OCI-LY7 (cell line): ENCODE measurements at regions of chr1 and their contacts with region 1.

Region 1: GRCh38 chr1:109483672-109484518 is at the start of gene ATXN7L2:
- DNase-seq: peak; percentile 95
- H3K4me3 ChIP-seq: peak within 1 kb of the TSS; percentile 74
- H3K27ac ChIP-seq: peak within 1 kb of the TSS; percentile 62
- H3K4me1 ChIP-seq: peaks cover 18% of the 10 kb centered on the region
- CTCF ChIP-seq: 0 out of 2 replicates have a peak, but pooled peaks have one; percentile 8
- total RNA-seq, gene ATXN7L2: 6.5 and 13.1 TPM in 2 replicates

Region 2: DNA sequence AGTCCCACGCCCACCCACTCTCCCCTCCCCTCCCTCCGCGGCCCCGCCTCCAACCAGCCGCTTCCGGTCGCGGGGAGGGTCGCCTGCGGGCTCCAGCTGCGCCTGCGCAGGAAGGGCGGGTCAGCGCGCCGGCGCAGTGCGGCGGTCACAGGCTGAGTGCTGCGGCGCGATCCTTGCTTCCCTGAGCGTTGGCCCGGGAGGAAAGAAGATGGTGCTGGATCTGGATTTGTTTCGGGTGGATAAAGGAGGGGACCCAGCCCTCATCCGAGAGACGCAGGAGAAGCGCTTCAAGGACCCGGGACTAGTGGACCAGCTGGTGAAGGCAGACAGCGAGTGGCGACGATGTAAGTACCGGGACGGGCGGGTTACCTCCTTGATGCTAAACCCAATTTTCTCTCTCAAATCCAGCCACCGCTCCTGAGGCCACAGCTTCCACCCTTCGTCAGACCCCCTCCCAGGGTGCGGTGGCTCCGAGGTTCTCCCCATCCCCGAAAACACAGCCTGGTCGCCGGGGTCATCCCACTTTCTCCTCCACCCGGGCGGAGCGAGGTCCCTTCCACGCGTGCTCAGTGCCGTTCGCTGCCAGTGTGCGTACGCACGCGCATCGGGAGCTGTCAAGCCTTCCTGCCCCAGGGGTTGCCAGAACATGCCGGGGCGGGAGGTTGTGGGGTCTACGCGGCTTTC is 270.0 kb before region 1 on chr1 and contains the start of gene SARS1:
- CTCF ChIA-PET with region 1: interaction called, 12 read pairs
- POLR2A ChIA-PET with region 1: no interaction called
- intact Hi-C with region 1: no loop called
- DNase-seq: peak; percentile 93
- H3K4me3 ChIP-seq: peak within 1 kb of the TSS; percentile 82
- H3K27ac ChIP-seq: peak within 1 kb of the TSS; percentile 73
- H3K4me1 ChIP-seq: peaks cover 34% of the 10 kb centered on the region
- CTCF ChIP-seq: no peak
- total RNA-seq, gene SARS1: 277 and 295 TPM in 2 replicates

Region 3: DNA sequence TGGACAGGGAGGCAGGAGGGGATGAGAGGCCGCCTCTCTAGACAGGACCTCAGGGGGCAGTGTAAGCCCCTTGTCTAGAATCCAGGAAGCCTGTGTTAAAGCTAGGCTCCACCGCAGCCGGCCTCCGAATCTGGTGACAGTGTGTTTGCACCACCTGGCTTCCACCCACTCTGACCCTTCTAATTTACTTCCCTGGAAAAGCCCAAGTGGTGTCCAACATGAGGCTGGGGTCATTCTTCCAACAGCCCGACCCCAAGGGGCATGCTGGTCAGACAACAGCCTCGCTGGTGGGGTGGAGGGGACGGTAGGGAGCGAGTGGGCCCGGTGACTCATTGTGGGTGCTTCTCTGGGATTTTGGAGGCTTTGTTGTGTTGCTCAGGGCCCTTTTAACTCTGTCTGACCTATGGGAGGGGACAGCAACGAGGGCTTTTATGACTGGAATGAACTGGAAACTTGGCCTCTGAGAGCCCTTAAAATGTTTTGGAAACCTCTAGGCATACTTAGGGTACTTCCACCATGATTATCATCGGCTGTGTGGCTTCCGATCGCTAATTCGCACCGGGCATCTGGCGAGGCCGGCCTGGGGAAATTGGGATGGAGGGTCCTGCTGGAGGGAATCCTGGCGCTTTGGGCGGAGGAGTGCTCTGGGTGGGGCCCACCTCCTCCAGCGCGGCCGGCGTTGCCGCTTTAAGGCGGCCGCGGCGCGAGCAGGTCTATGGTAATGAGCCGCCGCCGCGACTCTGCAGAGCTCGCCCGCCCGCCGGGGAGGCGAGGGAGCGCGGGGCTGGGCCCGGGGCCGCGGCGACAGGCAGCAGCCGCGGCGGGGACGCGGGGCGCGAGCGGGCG is 234.9 kb before region 1 on chr1 and contains the start of gene CELSR2:
- CTCF ChIA-PET with region 1: interaction called, 6 read pairs
- POLR2A ChIA-PET with region 1: interaction called, 4 read pairs
- intact Hi-C with region 1: loop called (anchors 1 kb)
- DNase-seq: peak; percentile 88
- H3K4me3 ChIP-seq: peak within 1 kb of the TSS; percentile 72
- H3K27ac ChIP-seq: no peak within 1 kb of the TSS
- H3K4me1 ChIP-seq: peaks cover 21% of the 10 kb centered on the region
- CTCF ChIP-seq: no peak
- total RNA-seq, gene CELSR2: 5.0 and 6.9 TPM in 2 replicates

Region 4: GRCh38 chr1:109282952-109283747 is 200.7 kb before region 1 on chr1 and contains the start of gene PSRC1:
- CTCF ChIA-PET with region 1: no interaction called
- POLR2A ChIA-PET with region 1: interaction called, 3 read pairs
- intact Hi-C with region 1: loop called (anchors 5 kb)
- DNase-seq: peak; percentile 94
- H3K4me3 ChIP-seq: peak within 1 kb of the TSS; percentile 77
- H3K27ac ChIP-seq: peak within 1 kb of the TSS; percentile 60
- H3K4me1 ChIP-seq: peaks cover 17% of the 10 kb centered on the region
- CTCF ChIP-seq: peak; percentile 70
- total RNA-seq, gene PSRC1: 42.7 and 44.5 TPM in 2 replicates

Region 5: GRCh38 chr1:109361649-109362048 is 122.2 kb before region 1 on chr1:
- CTCF ChIA-PET with region 1: no interaction called
- POLR2A ChIA-PET with region 1: no interaction called
- intact Hi-C with region 1: no loop called
- DNase-seq: no peak
- H3K4me3 ChIP-seq: no peak overlapping the region
- H3K27ac ChIP-seq: no peak overlapping the region
- H3K4me1 ChIP-seq: peaks cover 37% of the 10 kb centered on the region
- CTCF ChIP-seq: no peak

Region 6: DNA sequence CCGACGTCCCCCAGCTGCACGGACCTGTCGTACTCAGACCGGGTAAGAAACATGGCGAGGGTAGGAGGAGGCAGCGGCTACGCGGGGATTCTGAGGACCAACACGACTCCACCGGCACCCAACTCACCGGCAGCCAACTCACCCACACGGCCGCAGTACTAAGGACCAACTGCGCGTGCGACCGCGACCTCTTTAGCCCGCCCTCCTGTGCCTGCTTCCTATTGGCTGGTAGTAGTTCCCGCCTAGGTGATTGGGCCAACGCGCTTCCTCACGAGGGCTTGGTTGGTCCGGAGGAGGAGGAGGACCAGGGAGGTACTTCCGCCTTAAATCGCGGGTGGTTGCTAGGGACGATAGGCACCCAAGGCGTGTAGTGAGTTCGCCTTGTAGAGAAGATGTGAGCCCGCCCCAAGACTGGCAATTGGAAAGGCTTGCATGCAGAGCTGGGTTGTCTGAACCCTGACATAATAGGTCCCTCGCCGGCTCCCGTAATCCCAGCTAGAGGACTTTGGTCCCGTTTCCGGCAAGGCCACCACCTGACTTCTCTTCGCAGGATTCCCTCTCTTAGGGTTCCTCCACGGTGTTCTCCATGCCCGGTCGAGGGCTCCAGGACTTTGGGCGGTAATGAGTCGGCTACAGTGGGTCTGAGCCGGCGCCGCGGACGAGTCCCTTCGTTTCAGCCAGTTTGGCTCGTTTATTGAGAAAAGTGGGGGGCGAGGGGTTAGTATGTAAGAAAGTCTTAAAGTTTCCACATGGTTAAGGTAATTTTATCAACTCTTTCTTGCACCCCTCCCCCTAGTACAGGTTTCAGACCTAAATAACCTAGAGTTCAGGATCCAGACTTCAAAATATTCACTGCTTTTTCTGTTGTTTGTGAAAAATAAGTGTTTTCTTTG is 57.4 kb before region 1 on chr1 and contains the start of gene PSMA5:
- CTCF ChIA-PET with region 1: interaction called, 3 read pairs
- POLR2A ChIA-PET with region 1: interaction called, 5 read pairs
- intact Hi-C with region 1: loop called (anchors 1 kb)
- DNase-seq: peak; percentile 99
- H3K4me3 ChIP-seq: peak within 1 kb of the TSS; percentile 97
- H3K27ac ChIP-seq: peak within 1 kb of the TSS; percentile 85
- H3K4me1 ChIP-seq: peaks cover 25% of the 10 kb centered on the region
- CTCF ChIP-seq: no peak
- total RNA-seq, gene PSMA5: 46.3 and 53.3 TPM in 2 replicates

Region 7: GRCh38 chr1:109548321-109549267 is 64.7 kb after region 1 on chr1 and contains the start of gene GNAI3:
- CTCF ChIA-PET with region 1: interaction called, 14 read pairs
- POLR2A ChIA-PET with region 1: interaction called, 5 read pairs
- intact Hi-C with region 1: no loop called
- DNase-seq: peak; percentile 97
- H3K4me3 ChIP-seq: peak within 1 kb of the TSS; percentile 85
- H3K27ac ChIP-seq: peak within 1 kb of the TSS; percentile 79
- H3K4me1 ChIP-seq: peaks cover 25% of the 10 kb centered on the region
- CTCF ChIP-seq: no peak; the same call in 1 of the 2 replicates
- total RNA-seq, gene GNAI3: 3.8 and 4.1 TPM in 2 replicates

Region 8: GRCh38 chr1:109589177-109589576 is 105.3 kb after region 1 on chr1:
- CTCF ChIA-PET with region 1: no interaction called
- POLR2A ChIA-PET with region 1: no interaction called
- intact Hi-C with region 1: no loop called
- DNase-seq: no peak
- H3K4me3 ChIP-seq: no peak overlapping the region
- H3K27ac ChIP-seq: no peak overlapping the region
- H3K4me1 ChIP-seq: no peaks in the 10 kb centered on the region
- CTCF ChIP-seq: no peak